ENCODE measurements at regions of chr6 and their contacts with region 1.

Region 1: GRCh38 chr6:99151634-99152344 is 197.7 kb downstream of the FAXC start:
- DNase-seq: peak; percentile 74
- H3K4me3 Mint-ChIP-seq: no peak overlapping the region
- H3K27ac Mint-ChIP-seq: no peak overlapping the region
- H3K4me1 Mint-ChIP-seq: peaks cover 9% of the 10 kb centered on the region
- H3K27me3 Mint-ChIP-seq: peaks cover 13% of the 10 kb centered on the region
- CTCF ChIP-seq: peak; percentile 48

Region 2: GRCh38 chr6:99219788-99220187 is 68.0 kb after region 1 on chr6:
- CTCF ChIA-PET with region 1: interaction called, 5 read pairs
- intact Hi-C with region 1: loop called (anchors 1 kb)
- DNase-seq: peak; percentile 72
- H3K4me3 Mint-ChIP-seq: no peak overlapping the region
- H3K27ac Mint-ChIP-seq: no peak overlapping the region
- H3K4me1 Mint-ChIP-seq: no peaks in the 10 kb centered on the region
- H3K27me3 Mint-ChIP-seq: peaks cover 8% of the 10 kb centered on the region
- CTCF ChIP-seq: no peak

Region 3: GRCh38 chr6:99241905-99242534 is 90.2 kb after region 1 on chr6:
- CTCF ChIA-PET with region 1: interaction called, 24 read pairs
- intact Hi-C with region 1: loop called (anchors 1 kb)
- DNase-seq: peak; percentile 53
- H3K4me3 Mint-ChIP-seq: no peak overlapping the region
- H3K27ac Mint-ChIP-seq: no peak overlapping the region
- H3K4me1 Mint-ChIP-seq: no peaks in the 10 kb centered on the region
- H3K27me3 Mint-ChIP-seq: peaks cover 50% of the 10 kb centered on the region
- CTCF ChIP-seq: no peak

Region 4: GRCh38 chr6:99641270-99641669 is 489.5 kb after region 1 on chr6:
- CTCF ChIA-PET with region 1: no interaction called
- intact Hi-C with region 1: no loop called
- DNase-seq: no peak
- H3K4me3 Mint-ChIP-seq: no peak overlapping the region
- H3K27ac Mint-ChIP-seq: no peak overlapping the region
- H3K4me1 Mint-ChIP-seq: peaks cover 10% of the 10 kb centered on the region
- H3K27me3 Mint-ChIP-seq: peaks cover 27% of the 10 kb centered on the region
- CTCF ChIP-seq: no peak